Tibial artery (tissue), 4 donors: ENCODE measurements at regions of chr17 and their contacts with region 1.

Region 1: DNA sequence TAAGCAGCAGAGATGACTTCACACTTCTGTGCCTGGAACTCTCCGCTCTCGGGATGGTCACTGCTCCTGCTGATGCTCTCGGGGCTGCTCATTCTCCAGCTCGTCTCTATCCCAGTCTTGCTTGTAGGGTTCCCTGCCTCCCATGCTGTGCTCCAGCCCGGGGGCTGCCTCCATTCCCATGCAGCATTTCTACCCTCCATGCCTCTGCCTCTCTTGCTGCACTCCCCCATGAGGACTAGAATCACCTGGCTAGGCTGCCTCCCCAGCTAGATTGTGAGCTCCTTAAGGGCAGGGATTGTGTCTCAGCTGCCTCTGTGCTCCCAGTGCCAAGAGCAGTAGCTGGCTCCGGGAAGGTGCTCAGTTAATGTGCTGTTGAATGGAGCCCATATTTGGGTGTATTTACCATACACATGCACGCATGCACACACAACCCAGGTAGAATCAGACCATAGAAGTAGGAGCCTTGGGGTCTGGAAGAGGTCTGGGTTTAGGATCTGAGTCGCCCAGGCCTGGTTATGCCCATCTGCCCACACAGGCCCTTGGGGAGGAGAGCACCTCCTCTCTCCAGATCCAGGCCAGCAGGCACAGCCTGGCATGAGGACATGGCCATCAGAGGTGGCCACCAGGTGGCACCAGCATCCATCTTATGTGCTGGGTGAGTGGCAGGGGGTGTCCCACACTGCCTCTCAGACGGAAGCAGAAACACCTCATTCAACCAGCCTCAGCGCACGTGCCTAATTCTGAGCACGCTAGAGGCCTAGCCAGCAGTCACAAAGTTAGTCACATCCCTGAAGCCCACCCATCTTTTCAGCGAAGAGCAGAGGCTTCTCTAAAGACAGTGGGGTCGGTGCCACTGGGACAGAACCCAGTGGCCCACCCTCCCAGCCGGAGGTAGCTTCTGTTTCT is 9.3 kb downstream of the GIT1 start:
- DNase-seq: peak; percentile 89 to 90
- H3K4me3 ChIP-seq: no peak overlapping the region
- H3K27ac ChIP-seq: no peak overlapping the region
- H3K4me1 ChIP-seq: peaks cover 0 to 29% (median 9%) of the 10 kb centered on the region in 4 donors
- H3K27me3 ChIP-seq: no peaks in the 10 kb centered on the region
- CTCF ChIP-seq: peak; percentile 91 to 92

Region 2: DNA sequence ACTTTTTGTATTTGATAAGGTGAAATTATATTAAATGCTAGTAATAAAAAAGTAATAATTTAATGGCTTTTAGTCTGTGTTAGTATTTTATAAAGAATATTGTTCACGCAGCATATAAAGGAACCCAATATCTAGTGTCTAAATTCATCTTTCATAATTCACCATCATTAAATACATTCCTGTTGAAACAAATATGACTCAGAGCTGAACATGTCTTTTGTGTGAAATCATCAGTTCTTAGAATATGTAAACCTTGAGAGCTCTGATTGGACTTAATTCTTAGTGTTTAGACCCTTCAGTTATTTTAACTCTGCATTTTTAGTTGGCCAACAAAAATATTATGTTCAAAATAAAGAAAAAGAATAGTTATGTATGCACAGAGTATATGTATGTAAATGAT is 85.1 kb before region 1 on chr17:
- intact Hi-C with region 1: no loop called
- DNase-seq: no peak
- H3K4me3 ChIP-seq: no peak overlapping the region
- H3K27ac ChIP-seq: no peak overlapping the region
- H3K4me1 ChIP-seq: no peaks in the 10 kb centered on the region
- H3K27me3 ChIP-seq: no peaks in the 10 kb centered on the region
- CTCF ChIP-seq: no peak

Region 3: DNA sequence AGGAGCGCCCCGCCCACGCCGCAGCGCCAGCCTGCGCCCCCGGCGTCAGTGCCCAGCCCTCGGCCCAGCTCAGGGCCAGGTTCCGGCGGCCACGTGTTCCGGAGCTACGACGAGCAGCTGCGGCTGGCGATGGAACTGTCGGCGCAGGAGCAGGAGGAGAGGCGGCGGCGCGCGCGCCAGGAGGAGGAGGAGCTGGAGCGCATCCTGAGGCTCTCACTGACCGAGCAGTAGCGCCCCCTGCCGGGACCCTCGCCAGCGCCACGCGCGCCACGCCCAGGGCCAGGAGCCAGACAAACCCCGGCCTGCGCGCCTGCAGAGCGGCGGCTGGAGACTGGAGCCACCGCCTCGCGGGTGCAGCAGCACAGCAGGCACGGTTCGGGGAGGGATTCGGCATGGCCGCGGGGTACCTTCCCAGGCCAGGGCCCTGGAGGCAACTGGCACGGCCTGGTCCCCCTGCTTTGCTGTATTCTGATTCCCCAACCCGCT is 33.3 kb after region 1 on chr17:
- intact Hi-C with region 1: loop called (anchors 5 kb)
- DNase-seq: peak; percentile 94 to 96
- H3K4me3 ChIP-seq: peak overlapping the region; percentile 28 to 49
- H3K27ac ChIP-seq: peak overlapping the region in 1 of 2 donors; percentile 59
- H3K4me1 ChIP-seq: peaks cover 0 to 57% (median 53%) of the 10 kb centered on the region in 4 donors
- H3K27me3 ChIP-seq: peaks cover 0 to 5% of the 10 kb centered on the region in 2 donors
- CTCF ChIP-seq: peak; percentile 84

Region 4: DNA sequence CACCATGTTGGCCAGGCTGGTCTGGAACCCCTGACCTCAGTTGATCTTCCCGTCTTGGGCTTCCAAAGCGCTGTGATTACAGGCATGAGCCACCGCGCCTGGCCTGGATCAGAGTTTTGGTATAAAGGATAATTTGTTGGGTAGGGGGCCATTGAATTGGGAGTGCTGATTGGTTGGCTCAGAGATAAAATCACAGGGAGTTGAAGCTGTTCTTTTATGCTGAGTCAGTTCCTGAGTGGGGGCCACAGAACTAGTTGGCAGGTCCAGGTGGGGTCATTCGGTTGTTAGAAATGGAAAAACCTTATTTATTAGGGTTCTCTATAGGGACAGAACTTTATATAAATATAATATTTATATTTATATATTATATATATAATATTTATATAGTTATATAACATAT is 202.8 kb after region 1 on chr17:
- intact Hi-C with region 1: loop called (anchors 5 kb)
- DNase-seq: no peak
- H3K4me3 ChIP-seq: no peak overlapping the region
- H3K27ac ChIP-seq: no peak overlapping the region
- H3K4me1 ChIP-seq: peaks cover 0 to 10% (median 2%) of the 10 kb centered on the region in 4 donors
- H3K27me3 ChIP-seq: no peaks in the 10 kb centered on the region
- CTCF ChIP-seq: no peak